Activated B cell treated with CpG ODN at 0.5 μM for 24 hours (primary cell): ENCODE measurements at regions of chr1 and their contacts with region 1.

Region 1: GRCh38 chr1:93846211-93846991 is 32.6 kb downstream of the DNTTIP2 start:
- DNase-seq: peak; percentile 85
- ATAC-seq: peak; percentile 56
- H3K4me3 Mint-ChIP-seq: peak overlapping the region; percentile 93
- H3K27ac Mint-ChIP-seq: peak overlapping the region; percentile 96
- H3K4me1 Mint-ChIP-seq: peaks cover 24% of the 10 kb centered on the region
- H3K27me3 Mint-ChIP-seq: peaks cover 2% of the 10 kb centered on the region
- CTCF ChIP-seq: no peak

Region 2: GRCh38 chr1:93021539-93022134 is 824.8 kb before region 1 on chr1:
- CTCF ChIA-PET with region 1: no interaction called
- POLR2A ChIA-PET with region 1: no interaction called
- intact Hi-C with region 1: loop called (anchors 5 kb)
- DNase-seq: no peak
- ATAC-seq: peak; percentile 91
- H3K4me3 Mint-ChIP-seq: no peak overlapping the region
- H3K27ac Mint-ChIP-seq: no peak overlapping the region
- H3K4me1 Mint-ChIP-seq: peaks cover 11% of the 10 kb centered on the region
- H3K27me3 Mint-ChIP-seq: peaks cover 2% of the 10 kb centered on the region
- CTCF ChIP-seq: peak; percentile 97

Region 3: DNA sequence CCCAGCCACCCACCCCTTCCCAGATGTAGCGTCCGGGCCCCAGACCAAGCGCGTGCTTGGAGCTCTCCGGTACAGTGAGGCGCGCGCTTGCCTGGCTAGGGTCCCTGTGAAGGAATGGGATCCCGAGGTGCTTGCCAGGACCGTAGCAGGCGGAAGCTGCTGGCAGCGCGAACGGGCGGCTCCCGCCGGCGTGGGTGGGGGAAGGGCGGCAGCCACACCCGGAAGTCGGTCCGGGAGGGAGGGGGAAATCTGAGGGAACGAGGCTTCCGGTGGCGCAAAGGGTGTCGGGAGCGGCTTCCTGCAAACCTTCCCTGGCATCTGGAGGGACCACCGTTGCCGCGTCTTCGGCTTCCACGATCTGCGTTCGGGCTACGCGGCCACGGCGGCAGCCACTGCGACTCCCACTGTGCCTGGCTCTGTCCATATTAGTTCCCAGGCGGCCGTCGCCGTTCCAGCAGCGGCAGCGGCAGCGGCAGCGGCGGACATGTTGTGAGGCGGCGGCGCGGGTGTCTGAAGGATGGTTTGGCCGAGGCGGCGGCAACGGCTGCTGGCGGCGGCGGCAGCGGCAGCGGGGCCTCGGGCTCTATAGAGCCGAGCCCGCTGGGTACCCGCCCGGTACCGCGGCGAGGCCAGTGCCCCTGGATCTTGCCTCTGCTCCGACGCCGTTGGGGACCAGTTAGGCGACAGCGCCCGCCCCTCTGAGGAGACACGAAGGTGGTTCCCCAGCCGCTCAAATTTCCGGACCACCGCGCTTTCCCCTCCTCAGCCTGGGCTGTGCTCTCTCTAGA is 500.6 kb before region 1 on chr1 and contains the start of gene DR1:
- CTCF ChIA-PET with region 1: no interaction called
- POLR2A ChIA-PET with region 1: interaction called, 23 read pairs
- intact Hi-C with region 1: loop called (anchors 1 kb)
- DNase-seq: peak; percentile 92
- ATAC-seq: peak; percentile 77
- H3K4me3 Mint-ChIP-seq: peak within 1 kb of the TSS; percentile 100
- H3K27ac Mint-ChIP-seq: peak within 1 kb of the TSS; percentile 99
- H3K4me1 Mint-ChIP-seq: peaks cover 49% of the 10 kb centered on the region
- H3K27me3 Mint-ChIP-seq: no peaks in the 10 kb centered on the region
- CTCF ChIP-seq: no peak
- total RNA-seq, gene DR1: 62.3 and 62.9 TPM in 2 replicates

Region 4: DNA sequence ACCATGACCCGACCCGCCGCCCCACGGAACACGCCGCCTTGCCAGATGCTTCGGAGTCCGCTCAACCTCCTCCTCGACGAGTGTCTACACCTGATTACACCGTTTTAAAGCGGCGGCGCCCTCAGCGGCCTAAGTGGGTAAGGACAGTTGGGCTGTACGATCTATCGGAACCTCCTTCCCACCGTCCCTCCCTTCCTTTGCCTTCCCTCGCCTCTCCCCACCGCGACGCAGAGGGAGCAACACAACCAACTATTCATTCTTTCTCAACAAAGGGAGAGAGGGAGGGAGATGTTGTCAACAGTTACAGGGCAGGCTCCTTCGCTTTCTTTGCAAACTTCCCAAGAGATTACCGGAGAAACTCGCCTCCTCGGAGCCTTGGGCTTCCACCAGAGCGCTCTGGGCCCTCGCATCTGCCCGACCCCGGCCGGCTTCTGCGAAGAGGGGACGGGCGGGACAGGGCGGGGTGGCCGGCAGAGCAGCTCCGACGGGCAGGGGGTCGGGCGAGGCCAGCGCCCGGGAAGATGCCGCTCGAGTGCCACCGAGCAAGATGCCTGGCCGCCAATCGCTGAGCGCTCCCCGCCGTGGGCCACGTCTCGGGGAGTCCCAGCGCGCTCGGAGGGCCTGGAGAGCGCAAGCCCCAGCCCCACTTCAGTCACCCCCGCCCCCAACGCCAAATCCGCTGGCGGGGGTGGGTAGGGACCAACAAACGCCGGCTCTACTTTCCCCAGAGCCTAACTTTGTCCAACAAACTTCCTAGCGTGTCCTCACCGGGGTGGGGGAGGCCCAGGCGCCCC is 165.4 kb before region 1 on chr1:
- CTCF ChIA-PET with region 1: interaction called, 3 read pairs
- POLR2A ChIA-PET with region 1: interaction called, 15 read pairs
- intact Hi-C with region 1: loop called (anchors 1 kb)
- DNase-seq: peak; percentile 62
- ATAC-seq: peak; percentile 72
- H3K4me3 Mint-ChIP-seq: peak overlapping the region; percentile 99
- H3K27ac Mint-ChIP-seq: peak overlapping the region; percentile 94
- H3K4me1 Mint-ChIP-seq: peaks cover 76% of the 10 kb centered on the region
- H3K27me3 Mint-ChIP-seq: no peaks in the 10 kb centered on the region
- CTCF ChIP-seq: no peak

Region 5: GRCh38 chr1:93878889-93879586 is 32.6 kb after region 1 on chr1 and contains the start of gene DNTTIP2:
- CTCF ChIA-PET with region 1: interaction called, 4 read pairs
- POLR2A ChIA-PET with region 1: interaction called, 23 read pairs
- intact Hi-C with region 1: loop called (anchors 1 kb)
- DNase-seq: peak; percentile 77
- ATAC-seq: peak; percentile 91
- H3K4me3 Mint-ChIP-seq: peak within 1 kb of the TSS; percentile 96
- H3K27ac Mint-ChIP-seq: peak within 1 kb of the TSS; percentile 97
- H3K4me1 Mint-ChIP-seq: peaks cover 48% of the 10 kb centered on the region
- H3K27me3 Mint-ChIP-seq: no peaks in the 10 kb centered on the region
- CTCF ChIP-seq: no peak
- total RNA-seq, gene DNTTIP2: 65.6 and 69.7 TPM in 2 replicates